Calu3 (cell line): ENCODE measurements at regions of chr10 and their contacts with region 1.

Region 1: DNA sequence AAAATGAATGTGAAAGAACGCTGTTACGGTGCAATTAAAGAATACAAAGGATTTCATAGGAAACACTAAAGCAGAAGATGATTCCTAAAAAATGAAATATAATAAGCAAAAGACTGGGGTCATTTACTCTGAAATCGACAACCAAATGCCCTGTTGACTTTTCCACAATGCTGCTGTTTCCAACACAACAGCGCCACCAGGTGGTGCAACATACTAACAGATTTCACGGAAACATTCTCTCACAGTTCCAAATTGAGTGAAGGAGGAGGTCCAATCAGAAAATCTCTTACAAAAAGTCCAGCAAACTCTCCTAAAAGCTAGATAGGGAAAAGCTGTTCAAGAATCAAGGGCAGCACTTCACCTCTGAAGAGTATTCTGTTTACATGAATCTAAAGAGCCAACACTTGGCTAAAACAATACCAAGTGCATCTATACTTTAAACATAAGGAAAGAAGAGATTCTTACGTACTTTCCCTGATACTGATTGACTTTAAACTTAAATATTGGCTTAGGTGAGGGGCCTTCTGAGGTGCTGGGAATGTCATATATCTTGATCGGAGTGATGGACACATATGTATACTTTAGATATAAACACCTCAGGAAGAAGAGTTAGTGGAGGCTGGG is 55.9 kb downstream of the UPF2 start:
- DNase-seq: peak; percentile 79
- H3K4me3 Mint-ChIP-seq: no peak overlapping the region
- H3K27ac Mint-ChIP-seq: peak overlapping the region; percentile 62
- H3K4me1 Mint-ChIP-seq: peaks cover 11% of the 10 kb centered on the region
- H3K27me3 Mint-ChIP-seq: no peaks in the 10 kb centered on the region
- CTCF ChIP-seq: peak; percentile 77

Region 2: DNA sequence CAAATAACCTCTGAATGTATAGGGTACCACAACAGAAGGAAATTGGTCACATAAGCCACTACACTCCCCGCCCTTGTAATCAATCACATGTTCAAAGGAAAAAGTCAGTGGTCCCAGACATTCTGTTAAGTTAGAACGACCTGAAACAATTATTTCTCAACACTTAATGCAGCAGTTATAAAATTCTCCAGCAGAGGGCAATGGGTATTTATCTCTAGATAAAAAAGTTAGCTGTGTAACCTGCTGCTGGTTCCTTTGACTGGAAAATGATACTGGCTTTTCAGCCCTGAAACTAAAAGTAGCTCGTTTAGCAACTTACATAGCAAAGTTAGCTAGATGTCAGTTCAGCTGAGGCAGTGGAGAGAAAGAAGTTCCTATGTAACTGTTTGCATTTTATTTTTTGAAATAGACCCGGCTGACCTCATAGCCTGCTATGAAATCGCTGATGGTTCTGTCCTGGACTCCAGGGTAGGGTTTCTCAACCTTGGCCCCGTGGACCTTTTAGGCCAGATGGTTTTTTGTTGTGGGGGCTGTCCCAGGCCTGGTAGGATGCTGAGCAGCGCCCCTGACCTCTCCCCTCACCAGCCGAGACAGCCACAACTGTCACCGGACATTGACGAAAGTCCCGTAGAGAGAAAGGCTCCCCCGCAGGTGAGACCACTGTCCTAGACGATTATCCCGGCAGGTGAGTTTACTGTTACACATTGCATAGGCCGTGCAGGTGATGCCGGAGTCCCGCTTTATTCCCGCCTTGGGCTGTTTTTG is 203.7 kb before region 1 on chr10:
- CTCF ChIA-PET with region 1: interaction called, 16 read pairs
- intact Hi-C with region 1: loop called (anchors 2 kb)
- DNase-seq: peak; percentile 41
- H3K4me3 Mint-ChIP-seq: no peak overlapping the region
- H3K27ac Mint-ChIP-seq: no peak overlapping the region
- H3K4me1 Mint-ChIP-seq: no peaks in the 10 kb centered on the region
- H3K27me3 Mint-ChIP-seq: peaks cover 18% of the 10 kb centered on the region
- CTCF ChIP-seq: peak; percentile 37

Region 3: GRCh38 chr10:11793762-11794479 is 192.8 kb before region 1 on chr10:
- CTCF ChIA-PET with region 1: no interaction called
- intact Hi-C with region 1: loop called (anchors 1 kb)
- DNase-seq: peak; percentile 43
- H3K4me3 Mint-ChIP-seq: no peak overlapping the region
- H3K27ac Mint-ChIP-seq: no peak overlapping the region
- H3K4me1 Mint-ChIP-seq: peaks cover 17% of the 10 kb centered on the region
- H3K27me3 Mint-ChIP-seq: peaks cover 28% of the 10 kb centered on the region
- CTCF ChIP-seq: no peak

Region 4: DNA sequence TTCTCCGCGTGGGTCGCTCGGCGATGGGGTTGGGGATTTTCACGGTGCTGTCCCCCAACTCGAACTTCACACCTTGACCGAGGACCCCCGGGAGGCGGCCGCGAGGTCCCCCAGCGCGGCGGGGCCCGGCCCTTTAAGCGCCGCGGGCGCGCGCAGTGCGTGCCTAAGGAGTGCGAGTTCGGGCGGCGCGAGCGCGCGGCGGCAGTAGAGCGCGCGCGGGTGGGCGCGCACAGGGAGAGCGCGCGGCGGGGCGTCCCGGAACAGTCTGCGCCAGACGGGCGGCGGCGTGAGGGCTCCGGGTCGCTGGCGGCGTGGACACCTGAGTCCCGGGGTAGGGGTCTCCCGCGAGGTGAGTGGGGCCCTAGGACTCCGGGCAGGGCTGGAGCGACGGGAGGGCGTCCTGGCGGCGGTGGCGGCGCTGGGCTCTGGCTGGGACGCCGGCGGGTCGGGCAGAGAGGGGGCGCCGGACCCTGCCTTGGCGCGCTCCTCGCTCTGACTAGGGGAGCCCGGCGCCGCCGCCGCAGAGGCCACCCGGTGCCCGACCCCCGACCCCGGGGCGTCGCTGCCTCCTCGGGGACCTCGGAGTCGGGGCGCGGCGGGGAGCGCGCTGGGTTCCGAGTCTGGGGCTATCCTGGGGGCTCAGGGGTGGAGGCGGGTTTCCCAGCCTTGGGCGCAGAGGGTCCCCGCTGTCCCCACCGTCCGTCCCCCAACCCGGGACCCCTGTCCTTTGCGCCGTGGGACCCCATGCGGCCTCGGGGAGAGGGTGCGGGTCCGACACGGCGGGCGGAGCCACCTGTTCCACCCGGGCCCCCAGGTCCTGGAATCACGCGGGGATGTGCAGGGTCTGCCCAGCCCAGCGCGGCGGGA is 163.3 kb before region 1 on chr10 and contains the start of gene PROSER2:
- CTCF ChIA-PET with region 1: no interaction called
- intact Hi-C with region 1: loop called (anchors 10 kb)
- DNase-seq: peak; percentile 77
- H3K4me3 Mint-ChIP-seq: peak within 1 kb of the TSS; percentile 83
- H3K27ac Mint-ChIP-seq: peak within 1 kb of the TSS; percentile 53
- H3K4me1 Mint-ChIP-seq: peaks cover 50% of the 10 kb centered on the region
- H3K27me3 Mint-ChIP-seq: no peaks in the 10 kb centered on the region
- CTCF ChIP-seq: no peak
- total RNA-seq, gene PROSER2: 18.8 and 19.5 TPM in 2 replicates

Region 5: GRCh38 chr10:11881477-11882417 is 105.0 kb before region 1 on chr10:
- CTCF ChIA-PET with region 1: no interaction called
- intact Hi-C with region 1: loop called (anchors 1 kb)
- DNase-seq: peak; percentile 64
- H3K4me3 Mint-ChIP-seq: no peak overlapping the region
- H3K27ac Mint-ChIP-seq: peak overlapping the region; percentile 95
- H3K4me1 Mint-ChIP-seq: peaks cover 33% of the 10 kb centered on the region
- H3K27me3 Mint-ChIP-seq: no peaks in the 10 kb centered on the region
- CTCF ChIP-seq: no peak

Region 6: GRCh38 chr10:12628964-12629766 is 642.5 kb after region 1 on chr10:
- CTCF ChIA-PET with region 1: no interaction called
- intact Hi-C with region 1: no loop called
- DNase-seq: no peak
- H3K4me3 Mint-ChIP-seq: no peak overlapping the region
- H3K27ac Mint-ChIP-seq: no peak overlapping the region
- H3K4me1 Mint-ChIP-seq: no peaks in the 10 kb centered on the region
- H3K27me3 Mint-ChIP-seq: peaks cover 82% of the 10 kb centered on the region
- CTCF ChIP-seq: no peak